ENCODE measurements at regions of chr3 and their contacts with region 1.

Region 1: GRCh38 chr3:141192345-141192744 is 39.3 kb upstream of the PXYLP1 start:
- DNase-seq: peak; percentile 95
- H3K4me3 ChIP-seq: no peak overlapping the region
- H3K27ac ChIP-seq: no peak overlapping the region
- H3K4me1 ChIP-seq: no peaks in the 10 kb centered on the region
- H3K27me3 ChIP-seq: no peaks in the 10 kb centered on the region
- CTCF ChIP-seq: peak; percentile 88 to 99 (median 98)
- POLR2A ChIP-seq: no peak

Region 2: DNA sequence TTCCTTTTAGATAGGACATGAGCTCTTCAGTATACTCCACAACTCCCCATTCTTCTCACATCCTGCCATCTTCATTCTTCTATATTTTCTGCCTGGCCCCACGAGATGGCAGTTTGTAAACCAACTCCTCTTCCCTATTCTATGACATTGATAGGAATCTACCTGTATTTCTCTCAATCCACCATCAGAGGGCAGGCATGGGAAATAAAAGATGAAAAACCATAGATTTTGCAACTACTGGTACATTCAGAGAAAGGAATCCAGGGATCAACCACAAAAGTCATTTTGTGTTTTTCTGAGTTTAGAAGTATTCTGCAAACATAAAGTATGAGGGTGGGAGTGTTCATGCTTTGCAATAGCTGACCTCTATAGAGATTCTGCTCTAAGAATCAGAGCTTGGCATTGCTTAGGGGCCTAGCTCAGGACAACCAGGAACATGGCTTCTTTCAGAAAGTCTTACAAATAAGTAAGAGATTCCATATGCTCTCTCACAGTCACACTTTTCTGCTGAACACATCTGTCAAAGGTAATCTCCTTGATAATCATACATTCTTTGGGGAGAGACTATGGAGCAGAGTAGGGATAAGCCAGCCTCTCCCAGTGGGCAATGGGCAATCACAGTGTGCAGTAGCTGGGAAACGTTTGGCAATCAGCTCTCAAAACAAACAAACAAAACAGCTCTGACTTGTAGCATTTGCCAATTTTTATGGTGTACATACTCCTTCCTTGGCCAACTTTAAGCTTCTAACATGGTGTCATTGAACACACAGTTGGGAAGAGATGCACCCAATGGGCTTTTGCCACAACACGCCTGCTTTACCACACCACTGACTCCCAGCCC is 293.8 kb before region 1 on chr3:
- intact Hi-C with region 1: loop called (anchors 5 kb)
- DNase-seq: peak; percentile 25
- H3K4me3 ChIP-seq: no peak overlapping the region
- H3K27ac ChIP-seq: no peak overlapping the region
- H3K4me1 ChIP-seq: peaks cover 2% of the 10 kb centered on the region
- H3K27me3 ChIP-seq: no peaks in the 10 kb centered on the region
- CTCF ChIP-seq: peak in 3 of 4 experiments; percentile 36 to 71 (median 64)
- POLR2A ChIP-seq: no peak

Region 3: DNA sequence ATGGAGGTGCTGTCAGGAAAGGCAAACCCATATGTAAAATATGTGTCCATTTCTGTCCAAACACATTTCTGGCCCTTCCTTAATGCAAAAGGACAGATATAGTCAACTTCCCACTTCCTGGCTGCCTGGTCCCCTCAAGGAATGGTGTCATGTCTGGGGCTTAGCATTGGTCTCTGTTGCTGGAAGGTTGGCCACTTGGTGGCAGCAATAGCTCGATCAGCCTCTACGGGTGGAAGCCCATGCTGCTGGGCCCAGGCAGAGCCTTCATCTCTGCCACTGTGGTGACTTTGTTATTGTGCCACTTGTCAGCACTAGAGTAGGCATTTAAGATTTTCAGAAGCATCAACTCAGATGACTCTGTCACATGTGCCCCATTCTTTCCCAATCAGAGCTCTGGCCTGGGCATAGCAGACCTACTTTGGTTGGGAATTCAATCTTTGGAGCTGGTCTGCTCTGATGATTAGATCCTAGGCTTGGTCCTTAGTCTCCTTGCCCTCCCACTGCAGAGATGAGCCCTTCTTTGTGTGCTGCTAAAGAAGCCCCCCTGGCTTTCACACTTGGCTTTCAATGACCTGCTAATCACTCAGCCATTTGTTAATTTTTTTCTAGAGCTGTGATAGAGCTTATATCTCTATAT is 192.2 kb before region 1 on chr3:
- intact Hi-C with region 1: loop called (anchors 2 kb)
- DNase-seq: peak; percentile 33
- H3K4me3 ChIP-seq: no peak overlapping the region
- H3K27ac ChIP-seq: no peak overlapping the region
- H3K4me1 ChIP-seq: no peaks in the 10 kb centered on the region
- H3K27me3 ChIP-seq: no peaks in the 10 kb centered on the region
- CTCF ChIP-seq: peak; percentile 25 to 58 (median 46)
- POLR2A ChIP-seq: no peak